OCI-LY7 (cell line): ENCODE measurements at regions of chr20 and their contacts with region 1.

Region 1: DNA sequence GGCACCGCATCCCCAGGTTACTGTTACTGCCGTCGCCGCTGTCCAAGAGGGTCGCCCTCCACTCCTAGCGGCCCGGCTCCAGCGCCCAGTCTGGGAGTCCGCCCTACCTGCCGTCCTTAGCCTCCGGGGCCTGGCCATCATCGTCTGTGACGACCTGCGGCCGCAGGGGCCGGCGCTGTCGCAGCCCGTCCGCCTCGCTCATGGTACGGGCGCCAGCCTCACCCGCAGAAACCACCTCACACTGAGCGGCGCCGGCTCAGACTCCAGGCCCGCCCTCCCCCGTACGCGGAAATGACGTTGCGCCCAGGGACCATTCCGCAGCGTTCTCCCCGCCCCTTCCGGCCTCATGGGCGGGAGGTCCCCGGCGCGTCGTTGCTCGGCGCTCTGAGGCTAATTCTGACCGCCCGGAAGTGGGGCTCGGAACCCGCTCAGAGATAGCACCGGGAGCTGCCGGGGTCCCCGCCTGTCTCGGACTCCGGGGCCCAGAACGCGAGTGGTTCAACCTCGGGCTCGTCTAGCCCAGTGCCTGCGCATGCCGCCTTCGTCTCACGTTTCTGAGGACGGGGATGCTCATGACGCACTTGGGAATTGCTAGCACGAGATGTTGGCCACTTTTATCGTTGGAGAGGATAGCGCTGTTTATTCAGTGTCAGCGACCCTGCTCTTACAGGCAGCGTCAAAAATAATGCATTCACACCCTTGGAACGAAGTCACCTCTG is at the start of gene APMAP:
- DNase-seq: peak; percentile 95
- H3K4me3 ChIP-seq: peak within 1 kb of the TSS; percentile 86
- H3K27ac ChIP-seq: peak within 1 kb of the TSS; percentile 63
- H3K4me1 ChIP-seq: peaks cover 28% of the 10 kb centered on the region
- CTCF ChIP-seq: no peak
- total RNA-seq, gene APMAP: 27.7 and 29.0 TPM in 2 replicates

Region 2: DNA sequence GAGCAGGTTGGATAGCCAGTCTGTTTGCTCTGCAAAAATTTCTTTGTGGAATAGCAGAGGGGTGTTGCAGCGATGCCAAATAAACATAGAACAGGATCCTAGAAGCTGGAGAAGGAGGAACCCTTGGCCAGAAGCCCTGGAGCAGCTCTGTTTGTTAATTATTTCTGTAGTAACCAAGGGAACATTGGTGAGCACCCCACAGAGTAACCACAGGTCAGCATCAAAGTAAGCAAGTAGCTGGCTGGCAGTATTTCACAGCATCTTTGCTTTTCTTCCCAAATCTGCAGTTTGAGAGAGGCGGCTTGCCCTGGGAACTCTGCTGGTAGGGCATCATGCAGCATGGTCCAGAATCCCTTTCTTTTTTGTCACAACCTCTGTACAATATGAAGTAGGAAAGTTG is 12.6 kb after region 1 on chr20:
- CTCF ChIA-PET with region 1: no interaction called
- POLR2A ChIA-PET with region 1: no interaction called
- intact Hi-C with region 1: no loop called
- DNase-seq: no peak
- H3K4me3 ChIP-seq: no peak overlapping the region
- H3K27ac ChIP-seq: no peak overlapping the region
- H3K4me1 ChIP-seq: no peaks in the 10 kb centered on the region
- CTCF ChIP-seq: no peak

Region 3: DNA sequence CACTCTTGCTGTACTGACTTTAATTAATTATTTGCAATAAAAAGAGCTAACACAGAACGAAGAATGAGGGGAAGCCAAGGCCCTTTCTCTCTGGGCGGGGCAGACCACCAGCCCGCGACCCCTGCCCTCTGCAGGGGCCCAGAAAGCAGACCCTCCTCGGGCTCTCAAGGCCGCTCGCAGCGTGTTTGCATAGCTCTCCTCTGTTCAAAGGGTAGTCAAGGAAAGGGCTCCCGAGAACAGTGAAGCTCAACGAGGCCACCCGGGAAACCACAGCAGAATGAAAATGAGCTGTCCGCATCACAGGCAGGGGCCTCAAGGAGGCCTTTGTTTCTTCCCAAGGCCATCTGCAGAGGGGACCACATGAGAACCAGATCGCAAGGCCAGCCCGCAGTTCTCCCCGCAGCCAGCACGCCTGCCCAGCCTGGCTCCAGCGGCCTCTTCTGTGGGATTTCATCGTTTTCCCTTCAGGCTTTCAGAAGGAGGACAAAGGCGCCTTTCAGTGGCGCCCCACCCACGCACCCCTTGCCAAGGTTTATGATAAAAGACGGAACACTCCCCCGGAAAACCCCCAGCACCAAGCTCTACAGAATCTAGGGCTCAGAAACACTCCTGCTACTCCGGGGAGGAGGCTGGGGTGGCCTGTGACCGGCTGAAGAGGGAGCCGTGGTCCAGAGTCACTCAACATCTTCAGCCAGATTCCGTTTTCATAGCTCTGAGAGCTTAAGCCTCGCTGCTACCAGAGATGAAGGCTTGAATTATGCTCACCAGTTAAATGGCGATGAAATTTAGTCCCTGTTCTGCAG is 40.0 kb after region 1 on chr20:
- CTCF ChIA-PET with region 1: no interaction called
- POLR2A ChIA-PET with region 1: no interaction called
- intact Hi-C with region 1: no loop called
- DNase-seq: no peak
- H3K4me3 ChIP-seq: no peak overlapping the region
- H3K27ac ChIP-seq: no peak overlapping the region
- H3K4me1 ChIP-seq: peaks cover 24% of the 10 kb centered on the region
- CTCF ChIP-seq: no peak

Region 4: GRCh38 chr20:25065625-25066338 is 73.1 kb after region 1 on chr20:
- CTCF ChIA-PET with region 1: no interaction called
- POLR2A ChIA-PET with region 1: no interaction called
- intact Hi-C with region 1: loop called (anchors 1 kb)
- DNase-seq: peak; percentile 62
- H3K4me3 ChIP-seq: no peak overlapping the region
- H3K27ac ChIP-seq: no peak overlapping the region
- H3K4me1 ChIP-seq: no peaks in the 10 kb centered on the region
- CTCF ChIP-seq: peak; percentile 86

Region 5: DNA sequence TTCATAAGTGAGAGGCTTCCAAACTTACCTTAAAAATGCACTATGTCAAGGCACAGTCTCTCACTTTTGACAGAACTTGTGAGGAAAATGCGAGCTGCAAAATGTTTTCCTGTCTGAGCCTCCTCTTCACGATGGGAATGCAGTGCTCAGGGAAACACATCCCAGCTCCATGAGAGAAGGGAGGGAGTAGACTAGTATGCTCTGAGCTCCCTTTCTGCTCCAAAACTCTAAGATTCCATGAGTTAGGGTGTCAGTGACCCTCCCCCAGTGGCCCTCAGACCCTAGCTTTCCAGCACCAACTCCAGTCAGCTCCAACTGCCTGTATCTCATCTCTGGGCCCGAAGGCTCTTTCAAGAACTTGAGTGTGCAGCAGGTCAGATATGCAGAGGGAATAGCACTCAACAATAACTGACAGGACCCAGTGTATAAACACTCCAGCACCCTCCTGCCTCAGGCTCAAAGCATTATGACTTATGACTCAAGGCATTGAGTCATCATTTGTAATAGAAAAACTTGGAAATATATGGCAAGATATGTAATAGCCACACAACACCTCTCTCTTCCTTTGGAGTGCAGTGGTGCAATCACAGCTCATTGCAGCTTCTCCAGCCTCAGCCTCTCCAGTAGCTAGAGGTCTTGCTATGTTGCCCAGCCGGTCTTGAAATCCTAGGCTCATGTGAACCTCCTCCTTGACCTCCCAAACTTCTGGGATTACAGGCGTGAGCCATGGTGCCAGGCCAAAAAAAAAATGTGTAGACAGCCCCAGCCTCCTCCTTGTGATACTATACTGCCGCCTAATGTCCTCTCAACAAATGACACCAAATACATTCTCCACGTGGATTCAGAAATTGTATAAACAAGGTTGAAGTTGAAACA is 186.2 kb after region 1 on chr20:
- CTCF ChIA-PET with region 1: no interaction called
- POLR2A ChIA-PET with region 1: no interaction called
- intact Hi-C with region 1: loop called (anchors 2 kb)
- DNase-seq: peak; percentile 37
- H3K4me3 ChIP-seq: no peak overlapping the region
- H3K27ac ChIP-seq: no peak overlapping the region
- H3K4me1 ChIP-seq: no peaks in the 10 kb centered on the region
- CTCF ChIP-seq: peak; percentile 84

Region 6: GRCh38 chr20:25247956-25248785 is 255.5 kb after region 1 on chr20 and contains the start of gene PYGB:
- CTCF ChIA-PET with region 1: no interaction called
- POLR2A ChIA-PET with region 1: no interaction called
- intact Hi-C with region 1: loop called (anchors 5 kb)
- DNase-seq: peak; percentile 81
- H3K4me3 ChIP-seq: peak within 1 kb of the TSS; percentile 80
- H3K27ac ChIP-seq: peak within 1 kb of the TSS; percentile 47
- H3K4me1 ChIP-seq: peaks cover 38% of the 10 kb centered on the region
- CTCF ChIP-seq: no peak
- total RNA-seq, gene PYGB: 4.5 and 4.9 TPM in 2 replicates

Region 7: DNA sequence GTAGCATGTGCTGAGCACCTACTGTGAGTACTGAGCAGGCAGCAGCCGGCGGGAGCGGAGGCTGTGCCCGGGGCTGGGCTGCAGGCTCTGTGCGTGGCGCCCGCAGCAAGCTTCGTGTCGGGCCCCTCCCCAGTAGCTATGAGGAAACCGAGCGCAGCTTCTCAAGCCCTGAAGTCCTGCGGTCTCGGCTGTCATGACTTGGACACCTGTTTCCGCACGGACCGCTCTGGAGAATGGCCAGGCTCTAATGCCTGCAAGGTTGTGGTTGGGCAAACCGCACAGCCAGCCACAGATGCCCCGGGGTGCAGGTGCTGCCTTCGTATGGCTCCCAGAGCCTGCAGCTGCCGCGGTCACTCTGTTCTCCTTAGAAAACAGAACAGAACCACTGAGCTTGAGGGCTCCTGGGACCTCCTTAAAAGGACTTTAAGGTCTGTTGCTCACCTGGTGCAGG is 288.9 kb after region 1 on chr20:
- CTCF ChIA-PET with region 1: no interaction called
- POLR2A ChIA-PET with region 1: no interaction called
- intact Hi-C with region 1: loop called (anchors 1 kb)
- DNase-seq: peak; percentile 97
- H3K4me3 ChIP-seq: no peak overlapping the region
- H3K27ac ChIP-seq: no peak overlapping the region
- H3K4me1 ChIP-seq: peaks cover 32% of the 10 kb centered on the region
- CTCF ChIP-seq: no peak

Region 8: DNA sequence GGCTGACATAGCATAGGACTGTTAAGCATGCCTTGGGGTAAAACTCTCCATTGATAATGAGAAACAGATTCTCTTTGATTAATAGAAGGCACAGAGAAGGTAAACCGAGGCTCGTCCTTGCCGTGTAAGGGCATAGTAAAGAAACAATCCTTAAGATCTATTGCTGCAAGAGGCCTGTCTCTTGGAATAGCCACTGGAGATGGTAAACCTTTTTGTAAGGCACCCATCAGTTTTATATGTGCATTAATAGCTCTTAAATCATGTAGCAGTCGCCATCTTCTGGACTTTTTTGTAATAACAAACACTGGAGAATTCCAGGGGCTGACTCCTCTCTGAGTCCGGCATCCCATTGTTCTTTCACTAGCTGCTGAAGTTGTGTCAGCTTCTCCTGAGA is 406.4 kb after region 1 on chr20:
- CTCF ChIA-PET with region 1: no interaction called
- POLR2A ChIA-PET with region 1: no interaction called
- intact Hi-C with region 1: loop called (anchors 2 kb)
- DNase-seq: peak; percentile 66
- H3K4me3 ChIP-seq: no peak overlapping the region
- H3K27ac ChIP-seq: no peak overlapping the region
- H3K4me1 ChIP-seq: peaks cover 17% of the 10 kb centered on the region
- CTCF ChIP-seq: peak; percentile 78

Region 9: DNA sequence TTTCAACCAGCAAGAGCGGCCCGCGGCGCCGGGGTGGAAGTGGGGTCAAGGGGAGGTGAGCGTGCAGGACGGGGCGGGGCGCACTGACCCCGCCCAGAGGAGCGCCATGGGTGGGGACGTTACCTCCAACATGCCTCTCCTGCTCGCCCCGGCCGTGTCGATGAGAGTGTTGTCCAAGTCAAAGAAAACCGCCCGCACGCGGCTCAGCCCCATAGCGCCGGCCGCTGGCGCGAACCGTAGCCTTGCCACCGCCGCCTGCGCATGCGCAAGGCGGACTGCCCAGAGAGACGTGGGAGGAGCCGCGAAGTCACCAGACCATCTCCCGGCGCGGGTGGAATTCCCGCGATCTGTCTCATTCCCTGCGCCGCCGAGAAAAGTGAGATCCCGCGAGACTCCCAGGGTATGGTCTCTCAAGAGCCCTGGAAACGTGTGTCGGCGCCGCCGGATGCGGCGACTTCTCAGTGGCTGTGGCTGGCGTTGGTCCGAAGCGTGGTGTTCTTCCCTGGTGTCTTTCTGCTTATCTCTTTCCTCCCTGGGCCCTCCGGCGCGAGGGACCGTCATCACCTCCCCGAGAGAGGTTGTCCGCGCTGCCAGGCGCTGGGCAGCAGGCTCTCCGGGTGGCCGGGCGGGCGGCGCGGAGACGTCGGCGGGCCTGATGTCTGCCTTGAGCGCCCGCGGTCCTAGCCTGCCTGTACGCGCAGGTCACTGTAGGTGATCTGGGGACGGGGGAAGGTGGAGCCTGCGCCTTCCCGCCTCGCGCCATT is 631.3 kb after region 1 on chr20 and contains the start of gene NANP:
- CTCF ChIA-PET with region 1: no interaction called
- POLR2A ChIA-PET with region 1: no interaction called
- intact Hi-C with region 1: loop called (anchors 10 kb)
- DNase-seq: peak; percentile 79
- H3K4me3 ChIP-seq: peak within 1 kb of the TSS; percentile 81
- H3K27ac ChIP-seq: peak within 1 kb of the TSS; percentile 36
- H3K4me1 ChIP-seq: peaks cover 14% of the 10 kb centered on the region
- CTCF ChIP-seq: no peak
- total RNA-seq, gene NANP: 1.0 and 1.2 TPM in 2 replicates